B cell (primary cell): ENCODE measurements at regions of chr7 and their contacts with region 1.

Region 1: GRCh38 chr7:7968543-7969305 is at the start of gene GLCCI1:
- DNase-seq: peak; percentile 97
- ATAC-seq: peak; percentile 86
- H3K4me3 ChIP-seq: peak within 1 kb of the TSS; percentile 74 to 95 (median 87)
- H3K4me3 Mint-ChIP-seq: peak within 1 kb of the TSS; percentile 92
- H3K27ac ChIP-seq: peak within 1 kb of the TSS; percentile 82 to 83
- H3K27ac Mint-ChIP-seq: peak within 1 kb of the TSS; percentile 93
- H3K4me1 ChIP-seq: peaks cover 35 to 44% of the 10 kb centered on the region in 2 donors
- H3K4me1 Mint-ChIP-seq: peaks cover 34% of the 10 kb centered on the region
- H3K27me3 ChIP-seq: no peaks in the 10 kb centered on the region
- H3K27me3 Mint-ChIP-seq: no peaks in the 10 kb centered on the region
- CTCF ChIP-seq: no peak
- total RNA-seq, gene GLCCI1: 45.7 and 50.3 TPM in 2 replicates

Region 2: DNA sequence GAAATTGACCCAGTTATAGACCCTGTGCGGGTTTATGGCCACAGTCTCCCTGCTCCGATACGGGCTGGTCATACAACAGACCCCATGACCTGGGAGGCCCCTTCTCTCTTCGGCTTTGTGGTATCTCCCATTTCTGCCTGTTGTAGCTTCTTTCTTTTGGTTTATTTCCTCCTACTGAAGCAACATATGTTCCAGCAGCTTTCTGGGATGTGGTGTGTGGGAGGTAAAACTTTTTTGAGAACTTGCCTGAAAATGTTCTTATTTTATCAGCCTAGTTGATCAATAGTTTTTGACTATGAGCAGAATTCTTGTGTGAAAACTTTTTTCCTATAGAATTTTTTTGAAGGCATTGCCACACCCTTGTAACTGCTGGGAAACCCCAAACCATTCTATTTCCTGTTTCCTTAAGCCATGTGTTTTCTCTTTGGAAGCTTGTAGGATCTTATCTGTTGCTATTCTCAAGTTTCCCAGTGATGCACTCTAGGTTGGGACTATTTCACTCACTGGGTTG is 1601.0 kb before region 1 on chr7:
- CTCF ChIA-PET with region 1: no interaction called
- POLR2A ChIA-PET with region 1: no interaction called
- intact Hi-C with region 1: loop called (anchors 5 kb)
- DNase-seq: no peak
- ATAC-seq: no peak
- H3K4me3 ChIP-seq: no peak overlapping the region
- H3K4me3 Mint-ChIP-seq: no peak overlapping the region
- H3K27ac ChIP-seq: no peak overlapping the region
- H3K27ac Mint-ChIP-seq: no peak overlapping the region
- H3K4me1 ChIP-seq: peaks cover under 1 to 10% of the 10 kb centered on the region in 2 donors
- H3K4me1 Mint-ChIP-seq: peaks cover 2% of the 10 kb centered on the region
- H3K27me3 ChIP-seq: no peaks in the 10 kb centered on the region
- H3K27me3 Mint-ChIP-seq: no peaks in the 10 kb centered on the region
- CTCF ChIP-seq: no peak

Region 3: DNA sequence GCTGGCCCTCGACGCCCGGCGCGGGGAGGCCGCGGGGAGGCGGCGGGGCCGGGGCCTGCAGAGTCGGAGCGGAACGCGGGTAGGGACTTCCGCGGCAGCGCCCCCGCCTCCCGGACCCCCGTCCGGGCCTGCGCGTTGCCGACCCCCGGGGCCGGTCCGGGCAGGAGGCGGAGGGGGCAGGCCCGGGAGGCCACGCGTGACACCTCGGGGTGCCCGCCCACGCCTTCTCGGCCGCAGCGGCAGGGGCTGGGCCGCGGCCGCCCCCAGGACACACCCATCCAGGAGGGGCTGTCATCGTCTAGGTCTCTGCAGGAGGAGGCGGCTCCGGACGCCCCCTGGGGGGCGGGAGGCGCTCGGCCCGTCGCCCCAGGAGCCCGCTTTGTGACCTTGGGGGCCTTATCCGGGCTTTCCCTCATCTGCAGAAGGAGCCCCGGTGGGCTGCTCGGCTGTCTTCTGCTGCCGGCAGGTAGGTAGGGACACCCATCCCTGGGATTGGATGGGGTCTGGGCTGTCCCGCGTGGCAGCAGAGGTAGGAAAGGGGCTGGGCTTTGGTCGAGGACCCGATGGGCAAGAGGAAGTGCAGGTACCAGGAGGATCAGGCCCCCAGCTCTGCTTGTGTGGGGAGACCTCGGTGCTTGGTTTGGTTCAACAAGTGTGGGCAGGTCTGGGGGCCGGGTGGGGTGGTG is 1331.0 kb before region 1 on chr7:
- CTCF ChIA-PET with region 1: no interaction called
- POLR2A ChIA-PET with region 1: no interaction called
- intact Hi-C with region 1: no loop called
- DNase-seq: peak; percentile 86
- ATAC-seq: peak; percentile 86
- H3K4me3 ChIP-seq: peak overlapping the region in 4 of 5 experiments; percentile 37 to 69 (median 61)
- H3K4me3 Mint-ChIP-seq: peak overlapping the region; percentile 86
- H3K27ac ChIP-seq: peak overlapping the region; percentile 18 to 79
- H3K27ac Mint-ChIP-seq: peak overlapping the region; percentile 88
- H3K4me1 ChIP-seq: peaks cover 20 to 25% of the 10 kb centered on the region in 2 donors
- H3K4me1 Mint-ChIP-seq: peaks cover 35% of the 10 kb centered on the region
- H3K27me3 ChIP-seq: no peaks in the 10 kb centered on the region
- H3K27me3 Mint-ChIP-seq: no peaks in the 10 kb centered on the region
- CTCF ChIP-seq: peak; percentile 69

Region 4: DNA sequence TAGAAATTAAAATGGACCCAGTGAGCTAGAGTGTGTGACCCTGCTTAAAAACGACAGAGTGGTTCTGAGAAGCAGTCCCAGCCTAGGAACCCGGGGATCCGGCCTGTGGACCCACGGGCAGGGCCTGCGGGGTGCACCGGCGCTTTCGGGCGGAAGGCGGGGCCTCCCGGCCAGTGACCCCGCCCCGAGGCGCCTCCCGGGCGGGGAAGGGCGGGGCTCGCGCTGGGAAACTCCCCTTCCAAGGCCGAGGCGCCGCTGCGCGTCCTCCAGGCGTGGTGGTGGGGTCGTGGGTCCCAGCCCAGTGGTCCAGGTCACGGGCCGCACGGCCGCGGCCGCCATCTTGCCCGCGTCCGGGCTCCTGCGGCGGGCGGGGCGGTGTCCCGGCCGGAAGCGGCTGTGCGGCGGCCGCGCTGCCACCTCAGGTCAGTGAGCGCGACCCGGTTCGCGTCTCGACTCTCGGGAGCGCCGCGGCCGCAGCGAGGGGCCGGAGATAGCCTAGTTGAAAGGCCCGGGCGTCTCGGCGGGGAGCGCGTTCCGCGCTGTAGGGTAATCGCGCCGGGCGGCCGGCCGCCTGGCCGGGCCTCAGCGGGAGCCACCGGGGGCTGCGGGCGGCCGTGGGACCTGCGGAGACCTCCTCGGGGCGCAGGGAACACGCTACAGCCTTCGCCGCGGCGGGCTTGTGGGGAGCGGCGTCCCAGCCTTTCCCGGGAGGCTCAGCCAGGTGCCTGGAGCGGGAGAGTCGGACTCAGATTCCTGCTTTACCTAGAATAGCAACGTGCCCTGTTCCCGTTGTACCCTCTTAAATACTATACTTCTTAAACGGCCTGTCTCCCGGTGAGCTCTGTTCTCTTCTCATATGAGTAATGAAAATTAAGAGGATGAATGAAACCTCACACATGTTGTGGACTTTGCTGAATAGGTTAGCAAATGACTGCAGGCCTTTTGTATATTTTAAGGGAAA is 401.8 kb before region 1 on chr7 and contains the start of gene MIOS:
- CTCF ChIA-PET with region 1: no interaction called
- POLR2A ChIA-PET with region 1: interaction called, 9 read pairs
- intact Hi-C with region 1: loop called (anchors 2 kb)
- DNase-seq: peak; percentile 92
- ATAC-seq: peak; percentile 85
- H3K4me3 ChIP-seq: peak within 1 kb of the TSS; percentile 65 to 94 (median 81)
- H3K4me3 Mint-ChIP-seq: peak within 1 kb of the TSS; percentile 83
- H3K27ac ChIP-seq: peak within 1 kb of the TSS; percentile 93 to 99
- H3K27ac Mint-ChIP-seq: peak within 1 kb of the TSS; percentile 90
- H3K4me1 ChIP-seq: peaks cover 41 to 44% of the 10 kb centered on the region in 2 donors
- H3K4me1 Mint-ChIP-seq: peaks cover 35% of the 10 kb centered on the region
- H3K27me3 ChIP-seq: no peaks in the 10 kb centered on the region
- H3K27me3 Mint-ChIP-seq: no peaks in the 10 kb centered on the region
- CTCF ChIP-seq: no peak
- total RNA-seq, gene MIOS: 48.7 and 50.1 TPM in 2 replicates

Region 5: GRCh38 chr7:7761340-7761980 is 207.3 kb before region 1 on chr7:
- CTCF ChIA-PET with region 1: no interaction called
- POLR2A ChIA-PET with region 1: no interaction called
- intact Hi-C with region 1: loop called (anchors 1 kb)
- DNase-seq: peak; percentile 63
- ATAC-seq: peak; percentile 64
- H3K4me3 ChIP-seq: peak overlapping the region; percentile 46 to 73 (median 60)
- H3K4me3 Mint-ChIP-seq: peak overlapping the region; percentile 91
- H3K27ac ChIP-seq: peak overlapping the region; percentile 47 to 75
- H3K27ac Mint-ChIP-seq: peak overlapping the region; percentile 89
- H3K4me1 ChIP-seq: peaks cover 17 to 22% of the 10 kb centered on the region in 2 donors
- H3K4me1 Mint-ChIP-seq: peaks cover 35% of the 10 kb centered on the region
- H3K27me3 ChIP-seq: no peaks in the 10 kb centered on the region
- H3K27me3 Mint-ChIP-seq: no peaks in the 10 kb centered on the region
- CTCF ChIP-seq: peak; percentile 68

Region 6: GRCh38 chr7:7920481-7920880 is 48.2 kb before region 1 on chr7:
- CTCF ChIA-PET with region 1: no interaction called
- POLR2A ChIA-PET with region 1: interaction called, 6 read pairs
- intact Hi-C with region 1: loop called (anchors 1 kb)
- DNase-seq: peak; percentile 80
- ATAC-seq: peak; percentile 93
- H3K4me3 ChIP-seq: peak overlapping the region in 2 of 5 experiments; percentile 30 to 48
- H3K4me3 Mint-ChIP-seq: peak overlapping the region; percentile 66
- H3K27ac ChIP-seq: peak overlapping the region; percentile 53 to 60
- H3K27ac Mint-ChIP-seq: peak overlapping the region; percentile 66
- H3K4me1 ChIP-seq: peaks cover 33 to 44% of the 10 kb centered on the region in 2 donors
- H3K4me1 Mint-ChIP-seq: peaks cover 59% of the 10 kb centered on the region
- H3K27me3 ChIP-seq: no peaks in the 10 kb centered on the region
- H3K27me3 Mint-ChIP-seq: no peaks in the 10 kb centered on the region
- CTCF ChIP-seq: no peak

Region 7: DNA sequence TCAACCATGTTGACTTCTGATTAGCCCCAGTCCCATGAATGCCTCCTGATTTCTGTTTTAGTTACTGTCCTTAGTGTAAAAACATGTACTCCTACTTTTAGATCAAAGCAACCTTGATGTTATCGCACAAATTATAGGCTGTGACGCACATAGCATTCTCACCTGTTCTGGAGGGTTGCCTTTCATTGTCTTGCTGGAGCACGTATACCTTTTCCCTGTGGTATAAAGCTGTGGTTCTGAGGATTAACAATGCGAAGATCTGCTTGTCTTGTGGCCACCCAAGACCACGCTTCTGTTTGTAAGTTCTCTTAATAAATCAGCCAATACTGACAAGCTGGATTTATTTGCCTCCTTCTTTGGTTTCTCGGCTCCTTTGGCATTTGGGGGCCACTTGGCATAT is 30.3 kb before region 1 on chr7:
- CTCF ChIA-PET with region 1: no interaction called
- POLR2A ChIA-PET with region 1: no interaction called
- intact Hi-C with region 1: no loop called
- DNase-seq: no peak
- ATAC-seq: no peak
- H3K4me3 ChIP-seq: no peak overlapping the region
- H3K4me3 Mint-ChIP-seq: no peak overlapping the region
- H3K27ac ChIP-seq: no peak overlapping the region
- H3K27ac Mint-ChIP-seq: no peak overlapping the region
- H3K4me1 ChIP-seq: no peaks in the 10 kb centered on the region
- H3K4me1 Mint-ChIP-seq: peaks cover 4% of the 10 kb centered on the region
- H3K27me3 ChIP-seq: no peaks in the 10 kb centered on the region
- H3K27me3 Mint-ChIP-seq: no peaks in the 10 kb centered on the region
- CTCF ChIP-seq: no peak

Region 8: DNA sequence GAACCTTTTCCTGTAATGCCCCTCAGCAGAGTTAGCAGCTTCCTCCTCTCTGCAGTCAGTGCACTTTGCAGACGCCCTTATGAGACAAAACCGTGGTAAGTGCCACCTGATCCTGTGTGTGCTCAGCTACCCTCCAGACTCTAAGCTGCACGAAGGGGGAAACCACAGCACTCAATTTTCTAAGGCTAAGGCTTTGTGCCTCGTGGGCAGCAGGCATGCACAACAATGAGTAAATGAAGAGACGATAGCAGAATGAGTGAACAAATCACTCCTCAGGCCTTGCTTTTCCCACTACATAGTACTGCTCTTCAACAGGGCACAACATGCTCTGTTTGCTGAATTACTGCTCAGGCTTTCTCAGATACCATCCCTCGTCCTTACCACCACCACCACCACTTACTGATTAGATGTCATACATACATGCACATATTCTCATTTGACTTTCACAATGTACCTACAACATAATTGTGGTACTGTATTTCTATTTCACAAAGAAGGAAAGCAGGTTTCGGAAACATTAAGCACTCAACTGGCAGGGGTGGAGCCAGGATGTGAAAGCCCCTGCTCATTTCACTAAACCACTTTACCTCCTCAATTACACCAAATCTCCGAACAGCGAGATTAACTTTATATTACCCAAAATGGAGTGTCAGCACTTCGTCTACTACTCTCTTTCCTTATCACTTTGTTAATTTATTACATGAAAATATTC is 207.8 kb after region 1 on chr7:
- CTCF ChIA-PET with region 1: interaction called, 3 read pairs
- POLR2A ChIA-PET with region 1: no interaction called
- intact Hi-C with region 1: loop called (anchors 2 kb)
- DNase-seq: peak; percentile 79
- ATAC-seq: peak; percentile 86
- H3K4me3 ChIP-seq: peak overlapping the region in 4 of 5 experiments; percentile 3 to 55 (median 22)
- H3K4me3 Mint-ChIP-seq: peak overlapping the region; percentile 86
- H3K27ac ChIP-seq: peak overlapping the region; percentile 82 to 91
- H3K27ac Mint-ChIP-seq: peak overlapping the region; percentile 97
- H3K4me1 ChIP-seq: peaks cover 43 to 49% of the 10 kb centered on the region in 2 donors
- H3K4me1 Mint-ChIP-seq: peaks cover 56% of the 10 kb centered on the region
- H3K27me3 ChIP-seq: no peaks in the 10 kb centered on the region
- H3K27me3 Mint-ChIP-seq: no peaks in the 10 kb centered on the region
- CTCF ChIP-seq: no peak